Prostate gland (tissue), 2 donors: ENCODE measurements at regions of chr14 and their contacts with region 1.

Region 1: DNA sequence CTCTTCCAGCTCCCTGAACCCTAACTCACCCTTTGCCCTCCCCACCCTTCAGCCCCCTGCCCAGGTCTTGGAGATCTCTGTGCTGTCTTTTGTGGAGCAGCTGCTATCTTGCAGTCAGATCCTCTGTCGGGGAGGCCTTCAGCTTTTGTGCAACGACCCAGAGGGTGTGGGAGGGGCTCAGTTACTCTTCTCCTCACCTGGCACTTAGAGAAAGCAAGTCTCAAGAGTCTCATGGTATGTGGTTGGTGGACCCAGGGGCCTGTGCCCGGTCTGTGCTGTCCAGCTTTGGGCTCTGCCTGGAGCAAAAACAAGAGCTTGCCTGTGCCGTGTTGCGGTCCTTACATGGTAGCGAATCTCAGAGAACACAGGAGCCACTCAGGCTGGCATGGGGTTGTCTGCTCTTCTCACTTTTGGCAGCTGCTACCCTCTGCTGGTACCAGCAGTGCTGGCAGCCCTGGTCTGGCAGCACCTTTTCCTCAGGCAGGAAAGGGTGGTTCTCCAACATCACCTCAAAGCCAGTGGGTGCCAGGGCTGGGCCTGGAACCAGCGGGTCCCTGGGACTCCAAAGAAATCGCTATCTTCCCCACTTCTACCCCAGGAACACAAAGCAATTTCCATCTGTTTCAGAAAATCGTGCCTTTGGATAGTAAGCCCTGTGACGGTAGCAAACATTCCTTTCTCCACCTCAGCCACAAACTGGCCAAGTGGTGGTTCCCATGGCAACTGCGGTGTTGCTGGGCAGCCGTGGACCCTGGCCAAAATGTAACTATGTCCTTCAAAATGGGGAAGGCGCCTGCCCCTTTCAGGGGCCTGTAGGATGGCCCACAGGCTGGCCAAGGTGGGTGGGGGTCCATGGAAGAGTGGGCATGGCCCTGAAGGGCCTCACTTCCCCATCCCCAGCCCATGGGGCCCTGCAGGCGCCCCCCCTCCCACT is 90.0 kb downstream of the RIN3 start:
- DNase-seq: peak; percentile 52
- H3K4me3 ChIP-seq: no peak overlapping the region
- H3K27ac ChIP-seq: peak overlapping the region; percentile 26 to 32
- H3K4me1 ChIP-seq: no peaks in the 10 kb centered on the region
- H3K27me3 ChIP-seq: no peaks in the 10 kb centered on the region
- CTCF ChIP-seq: peak in 2 of 4 experiments; percentile 36 to 41
- POLR2A ChIP-seq: no peak

Region 2: DNA sequence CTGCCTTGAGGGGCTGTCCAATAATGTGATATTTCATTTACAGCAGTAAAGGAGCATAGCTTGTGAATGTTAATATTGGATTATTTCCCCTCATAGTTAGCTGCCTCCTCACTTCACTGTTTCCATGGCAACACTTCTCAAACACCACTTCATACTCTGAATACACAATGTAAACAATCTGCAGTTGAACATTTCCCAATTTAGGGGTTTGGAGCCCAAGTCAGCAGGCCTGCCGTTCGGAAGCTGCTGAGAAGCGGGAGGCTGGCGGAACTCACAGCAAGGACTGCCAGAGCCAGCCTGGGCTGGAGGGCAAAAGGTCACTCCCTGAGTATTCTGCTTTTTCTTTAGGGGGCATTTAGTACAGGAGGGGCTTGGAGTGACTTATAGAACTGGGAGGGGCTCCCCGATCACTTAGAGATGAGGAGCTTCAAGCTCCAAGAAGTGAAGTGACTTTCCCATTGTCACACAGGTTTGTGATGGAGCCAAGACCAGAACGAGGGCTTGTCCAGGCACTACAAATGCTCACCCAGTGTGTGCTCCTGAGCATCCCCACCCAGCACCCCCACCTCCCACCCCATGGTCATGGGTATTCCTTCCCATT is 292.7 kb before region 1 on chr14:
- intact Hi-C with region 1: no loop called
- DNase-seq: no peak
- H3K4me3 ChIP-seq: no peak overlapping the region
- H3K27ac ChIP-seq: no peak overlapping the region
- H3K4me1 ChIP-seq: no peaks in the 10 kb centered on the region
- H3K27me3 ChIP-seq: no peaks in the 10 kb centered on the region
- CTCF ChIP-seq: no peak
- POLR2A ChIP-seq: no peak

Region 3: GRCh38 chr14:92649935-92650545 is 46.5 kb after region 1 on chr14:
- intact Hi-C with region 1: loop called (anchors 5 kb)
- DNase-seq: peak; percentile 77
- H3K4me3 ChIP-seq: no peak overlapping the region
- H3K27ac ChIP-seq: peak overlapping the region; percentile 77 to 79
- H3K4me1 ChIP-seq: peaks cover 15% of the 10 kb centered on the region
- H3K27me3 ChIP-seq: no peaks in the 10 kb centered on the region
- CTCF ChIP-seq: no peak
- POLR2A ChIP-seq: no peak

Region 4: DNA sequence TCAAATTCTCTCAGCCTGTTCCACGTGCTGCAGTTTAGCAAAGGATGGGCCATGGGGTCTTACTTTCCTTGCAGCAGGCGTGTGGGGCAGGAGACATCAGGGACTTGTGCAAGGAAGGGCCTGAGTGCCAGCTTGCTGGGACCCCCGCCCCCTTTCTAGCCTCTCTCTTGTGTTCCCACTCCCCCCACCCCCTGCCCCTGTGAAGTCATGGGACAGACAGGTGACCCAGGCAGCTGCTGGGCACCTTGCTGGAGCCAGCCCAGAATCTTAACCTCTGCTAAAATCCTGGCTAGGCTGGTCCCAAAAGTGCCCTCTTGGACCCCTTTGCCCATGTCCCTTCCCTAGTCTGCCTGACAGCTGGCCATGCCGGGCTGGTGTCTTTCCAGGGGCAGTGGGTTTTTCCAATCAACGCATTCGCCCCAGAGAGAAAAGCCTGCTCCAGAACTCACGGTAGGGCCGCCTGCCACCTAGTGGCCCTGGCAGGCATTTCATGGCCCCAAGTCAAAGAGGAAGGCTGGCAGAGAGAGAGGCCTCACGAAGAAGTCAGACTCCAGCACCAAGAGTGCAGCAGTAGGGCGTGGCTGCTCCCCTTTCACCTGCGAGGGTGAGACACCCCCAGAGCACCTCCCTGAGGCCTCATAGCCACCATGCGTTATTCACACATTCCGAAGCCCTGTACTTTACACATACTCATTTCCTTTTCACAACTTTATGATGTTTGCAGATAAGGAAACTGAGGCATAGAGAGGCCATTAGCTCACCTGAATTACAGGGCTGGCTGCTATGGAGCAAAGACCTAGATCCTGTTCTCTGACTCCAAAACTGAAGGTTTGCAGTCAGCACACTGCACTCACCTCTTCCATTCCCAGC is 77.4 kb after region 1 on chr14:
- intact Hi-C with region 1: loop called (anchors 5 kb)
- DNase-seq: peak; percentile 68
- H3K4me3 ChIP-seq: no peak overlapping the region
- H3K27ac ChIP-seq: no peak overlapping the region
- H3K4me1 ChIP-seq: no peaks in the 10 kb centered on the region
- H3K27me3 ChIP-seq: no peaks in the 10 kb centered on the region
- CTCF ChIP-seq: peak; percentile 59 to 91 (median 83)
- POLR2A ChIP-seq: no peak

Region 5: DNA sequence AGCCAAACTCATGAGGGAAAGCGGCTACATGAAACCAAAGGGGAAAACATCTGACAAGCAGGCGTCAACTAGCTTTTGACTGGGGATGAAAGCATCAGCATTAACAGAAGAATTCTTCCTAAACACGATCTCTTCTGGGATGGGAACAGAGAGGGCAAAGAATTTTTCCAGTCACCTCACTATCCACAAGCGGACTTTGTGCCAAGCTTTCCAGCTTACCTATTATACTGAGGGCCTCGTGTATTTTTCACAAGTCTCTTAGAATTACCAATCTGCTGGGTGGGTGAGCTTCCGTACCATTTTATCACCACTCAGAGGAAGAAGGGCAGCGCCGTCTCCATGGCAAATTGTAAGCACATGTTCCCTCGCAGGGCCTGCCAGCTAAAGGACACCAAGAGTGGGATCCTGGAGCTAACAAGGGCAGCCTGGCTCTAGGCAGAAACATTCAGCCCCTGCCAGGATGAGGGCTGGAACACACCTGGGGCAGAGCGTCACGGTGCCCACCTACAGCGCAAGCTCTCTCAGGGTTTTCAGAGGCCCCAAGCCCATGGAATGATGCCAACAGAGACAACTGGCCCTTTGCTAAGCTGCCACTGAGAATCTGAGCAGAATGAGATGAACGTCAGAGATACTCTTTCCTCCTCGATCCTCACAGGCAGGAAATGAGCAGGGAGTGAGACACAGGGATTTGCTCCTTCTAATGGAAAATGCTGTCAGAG is 393.9 kb after region 1 on chr14:
- intact Hi-C with region 1: no loop called
- DNase-seq: no peak
- H3K4me3 ChIP-seq: no peak overlapping the region
- H3K27ac ChIP-seq: no peak overlapping the region
- H3K4me1 ChIP-seq: peaks cover 7% of the 10 kb centered on the region
- H3K27me3 ChIP-seq: no peaks in the 10 kb centered on the region
- CTCF ChIP-seq: no peak
- POLR2A ChIP-seq: no peak